Activated T-helper 1 cell treated with anti-CD3 and anti-CD28 coated beads, Interleukin-12 subunit alpha, Interleukin-12 subunit beta, Interleukin-2, Interleukin-4 antibody, amounts not matched to agents 30 ng/mL and 10 ng/mL and 1 ng/mL, durations not matched to agents 14 hours and 24 hours and 36 hours (primary cell): ENCODE measurements at regions of chr14 and their contacts with region 1.

Region 1: DNA sequence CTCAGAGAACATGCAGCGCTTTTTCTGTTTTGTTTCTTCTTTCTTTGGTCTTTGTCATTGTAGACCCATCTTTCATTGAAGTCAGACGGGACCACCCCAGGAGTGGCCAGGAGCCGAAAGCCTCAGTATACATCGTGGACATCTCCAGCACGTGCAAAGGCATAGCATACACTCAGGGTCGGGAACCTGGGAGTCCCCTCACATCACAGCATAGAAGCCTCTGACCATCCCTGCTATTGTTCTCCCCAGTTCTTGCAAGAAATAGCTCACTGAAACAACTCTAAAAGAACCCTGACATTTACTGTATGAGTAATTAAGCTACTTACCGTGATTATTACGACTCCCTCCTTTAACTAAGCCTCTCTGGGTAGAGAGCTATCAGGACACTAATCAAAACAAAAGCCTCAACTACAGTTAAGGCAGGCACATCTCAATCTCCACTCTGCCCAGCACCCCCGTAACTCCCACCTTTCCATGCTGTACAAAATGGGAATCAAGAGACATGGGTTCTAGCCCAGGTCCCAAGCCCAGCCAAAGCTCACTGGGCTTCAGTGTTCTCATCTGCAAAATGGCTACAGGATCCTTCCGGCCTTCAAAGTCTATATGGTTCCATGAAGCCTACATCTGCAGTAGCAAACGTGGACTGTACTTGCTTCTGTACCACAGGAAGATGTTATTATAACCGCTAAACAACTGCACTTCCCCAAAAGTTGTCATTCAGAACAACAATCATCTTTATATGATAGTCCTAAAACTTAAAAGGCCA is 6.7 kb downstream of the CCDC88C start:
- DNase-seq: no peak
- H3K4me3 Mint-ChIP-seq: peak overlapping the region; percentile 72
- H3K27ac Mint-ChIP-seq: peak overlapping the region; percentile 96
- H3K4me1 Mint-ChIP-seq: peaks cover 89% of the 10 kb centered on the region
- H3K27me3 Mint-ChIP-seq: no peaks in the 10 kb centered on the region

Region 2: GRCh38 chr14:91396959-91397815 is 13.8 kb before region 1 on chr14:
- intact Hi-C with region 1: loop called (anchors 1 kb)
- DNase-seq: peak; percentile 54
- H3K4me3 Mint-ChIP-seq: peak overlapping the region; percentile 73
- H3K27ac Mint-ChIP-seq: peak overlapping the region; percentile 93
- H3K4me1 Mint-ChIP-seq: peaks cover 78% of the 10 kb centered on the region
- H3K27me3 Mint-ChIP-seq: no peaks in the 10 kb centered on the region